ENCODE measurements at regions of chr12 and their contacts with region 1.

Region 1: GRCh38 chr12:122752464-122753318 is at the start of gene DENR:
- DNase-seq: peak; percentile 98 to 99
- ATAC-seq: peak; percentile 99 to 100 (median 100)
- H3K4me3 ChIP-seq: peak within 1 kb of the TSS; percentile 98
- H3K27ac ChIP-seq: peak within 1 kb of the TSS; percentile 90
- H3K4me1 ChIP-seq: peaks cover 14% of the 10 kb centered on the region
- H3K27me3 ChIP-seq: no peaks in the 10 kb centered on the region
- CTCF ChIP-seq: peak; percentile 59
- total RNA-seq, gene DENR: 30.2 to 39.0 (median 33.5) TPM

Region 2: DNA sequence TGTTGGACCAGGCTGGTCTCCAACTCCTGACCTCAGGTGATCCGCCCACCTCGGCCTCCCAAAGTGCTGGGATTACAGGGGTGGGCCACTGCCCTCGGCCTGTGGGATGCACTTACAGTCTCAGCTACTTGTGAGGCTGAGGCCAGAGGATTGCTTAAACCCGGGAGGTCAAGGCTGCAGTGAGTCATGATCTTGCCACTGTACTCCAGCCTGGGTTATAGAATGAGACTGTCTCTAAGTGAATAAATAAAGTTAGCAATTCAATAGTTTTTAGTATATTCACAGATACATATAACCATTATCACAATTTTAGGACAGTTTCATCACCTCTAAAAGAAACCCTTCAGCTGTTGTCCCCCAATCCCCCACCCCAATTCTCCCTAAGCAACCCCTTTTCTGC is 110.7 kb before region 1 on chr12:
- intact Hi-C with region 1: loop called in 1 of 2 experiments (anchors 2 kb)
- DNase-seq: no peak
- ATAC-seq: no peak
- H3K4me3 ChIP-seq: no peak overlapping the region
- H3K27ac ChIP-seq: no peak overlapping the region
- H3K4me1 ChIP-seq: no peaks in the 10 kb centered on the region
- H3K27me3 ChIP-seq: no peaks in the 10 kb centered on the region
- CTCF ChIP-seq: no peak